Aorta (tissue), 5 donors: ENCODE measurements at regions of chr7 and their contacts with region 1.

Region 1: GRCh38 chr7:89183712-89184111 is 388.2 kb upstream of the TEX47 start:
- DNase-seq: no peak
- ATAC-seq: no peak
- H3K4me3 ChIP-seq: no peak overlapping the region
- H3K27ac ChIP-seq: no peak overlapping the region
- H3K4me1 ChIP-seq: no peaks in the 10 kb centered on the region
- H3K27me3 ChIP-seq: no peaks in the 10 kb centered on the region

Region 2: GRCh38 chr7:88669913-88670312 is 513.8 kb before region 1 on chr7:
- intact Hi-C with region 1: no loop called
- DNase-seq: no peak
- ATAC-seq: no peak
- H3K4me3 ChIP-seq: no peak overlapping the region
- H3K27ac ChIP-seq: no peak overlapping the region
- H3K4me1 ChIP-seq: no peaks in the 10 kb centered on the region
- H3K27me3 ChIP-seq: no peaks in the 10 kb centered on the region

Region 3: DNA sequence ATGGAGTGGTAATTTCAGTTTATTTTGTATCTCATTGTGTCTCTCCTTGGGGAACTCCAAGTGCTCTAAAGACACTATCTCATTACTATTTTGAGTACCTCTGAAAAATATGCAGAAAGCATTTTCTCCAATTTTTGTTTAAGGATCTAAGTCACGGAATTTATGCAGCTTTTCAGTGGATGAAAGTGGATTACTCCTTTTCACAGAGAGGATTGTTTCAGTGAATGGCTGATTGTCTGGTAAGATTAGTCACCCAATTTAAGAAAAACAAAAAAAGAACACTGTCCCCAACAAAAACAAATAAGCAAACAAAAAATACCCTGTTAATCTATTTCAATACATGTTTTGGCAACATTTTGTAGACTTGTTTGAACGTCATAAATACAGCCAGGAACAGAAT is 49.9 kb before region 1 on chr7:
- intact Hi-C with region 1: loop called in 1 of 2 experiments (anchors 5 kb)
- DNase-seq: no peak
- ATAC-seq: no peak
- H3K4me3 ChIP-seq: no peak overlapping the region
- H3K27ac ChIP-seq: no peak overlapping the region
- H3K4me1 ChIP-seq: no peaks in the 10 kb centered on the region
- H3K27me3 ChIP-seq: no peaks in the 10 kb centered on the region

Region 4: DNA sequence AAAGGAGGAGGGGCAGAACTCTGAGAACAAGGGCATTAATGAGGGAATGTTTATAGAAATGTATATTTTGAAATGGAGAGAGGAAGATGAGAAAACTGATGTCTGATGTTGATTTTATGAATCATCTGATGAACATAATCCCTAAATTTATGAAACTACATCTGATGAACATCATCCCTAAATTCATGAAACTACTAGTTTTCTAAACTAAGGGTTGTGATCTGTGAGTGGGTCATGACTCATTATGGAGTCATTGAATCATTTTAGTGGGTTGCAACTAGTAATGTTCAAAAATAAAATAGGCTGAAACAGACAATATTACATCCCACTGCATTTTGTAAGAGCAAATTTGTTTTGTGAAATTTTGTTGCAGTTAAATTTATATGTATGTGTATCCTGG is 54.4 kb after region 1 on chr7:
- intact Hi-C with region 1: no loop called
- DNase-seq: no peak
- ATAC-seq: no peak
- H3K4me3 ChIP-seq: no peak overlapping the region
- H3K27ac ChIP-seq: no peak overlapping the region
- H3K4me1 ChIP-seq: no peaks in the 10 kb centered on the region
- H3K27me3 ChIP-seq: no peaks in the 10 kb centered on the region